ENCODE measurements at regions of chr7 and their contacts with region 1.

Region 1: DNA sequence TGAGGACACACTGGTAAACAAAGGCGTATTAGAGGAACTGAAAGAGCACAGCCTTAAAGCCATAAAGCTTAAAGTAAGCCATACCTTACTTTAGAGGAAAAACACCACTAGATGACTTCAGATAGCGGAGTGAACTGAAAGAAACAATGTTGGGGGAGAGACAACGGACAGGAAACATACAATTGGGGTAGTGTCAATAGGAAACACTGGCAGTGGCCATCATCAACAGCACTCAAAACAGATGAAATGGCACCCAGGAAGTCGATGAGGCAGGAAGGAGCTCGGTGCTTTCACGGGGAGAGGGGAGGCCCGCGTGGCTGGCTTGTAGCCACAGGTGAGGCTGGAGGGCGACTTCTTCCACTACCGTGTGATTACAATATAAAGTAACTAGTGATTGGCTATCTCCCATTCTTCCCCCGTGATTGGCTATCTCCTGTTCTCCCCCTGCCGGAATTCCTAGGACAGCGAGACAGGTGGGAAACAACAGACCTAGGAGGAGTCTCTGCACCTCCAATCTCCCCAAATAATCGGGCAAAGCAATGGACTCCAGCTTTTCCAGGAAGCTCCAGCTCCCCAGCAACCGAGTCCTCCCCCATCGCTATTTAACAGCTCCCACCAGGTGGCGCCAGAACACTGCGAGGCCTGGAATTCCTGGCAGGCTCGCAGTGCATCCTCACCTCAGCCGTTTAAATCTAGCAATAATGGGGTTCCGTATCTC is 2.4 kb upstream of the TAS2R38 start:
- DNase-seq: peak; percentile 79
- ATAC-seq: peak; percentile 79
- H3K4me3 Mint-ChIP-seq: peak overlapping the region; percentile 68
- H3K27ac Mint-ChIP-seq: peak overlapping the region; percentile 54
- H3K4me1 Mint-ChIP-seq: peaks cover 16% of the 10 kb centered on the region
- H3K27me3 Mint-ChIP-seq: no peaks in the 10 kb centered on the region

Region 2: DNA sequence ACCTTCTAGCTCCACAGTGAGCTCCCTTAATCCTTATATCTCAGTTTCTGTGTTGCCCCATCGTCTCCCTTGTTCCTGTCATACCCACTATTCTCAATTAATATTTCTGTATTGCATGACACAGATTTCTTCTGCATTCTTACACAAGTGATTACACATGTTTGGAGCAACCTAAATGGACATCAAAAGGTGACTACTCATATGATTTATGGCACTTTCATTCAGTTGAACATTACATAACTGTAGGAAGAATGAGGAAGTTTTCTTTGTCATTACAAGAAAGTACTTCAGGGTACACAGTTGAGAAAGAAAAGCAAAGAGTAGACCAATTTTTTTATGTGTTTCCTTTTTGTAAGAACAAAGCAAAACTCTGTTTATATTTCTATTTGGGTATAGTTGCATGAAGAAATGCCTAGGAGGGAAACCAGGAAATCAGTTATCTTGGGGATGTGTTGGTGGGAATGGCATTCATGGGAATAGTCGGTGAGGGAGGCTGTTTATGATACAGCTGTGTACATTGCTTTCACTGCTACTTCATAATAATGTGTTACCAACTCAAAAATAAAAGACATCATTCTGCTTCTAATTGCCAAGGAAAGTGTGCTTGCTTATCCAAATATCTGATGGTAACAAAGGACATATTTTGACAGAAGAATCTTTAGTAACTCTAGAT is 111.1 kb before region 1 on chr7:
- CTCF ChIA-PET with region 1: no interaction called
- DNase-seq: no peak
- ATAC-seq: no peak
- H3K4me3 Mint-ChIP-seq: no peak overlapping the region
- H3K27ac Mint-ChIP-seq: no peak overlapping the region
- H3K4me1 Mint-ChIP-seq: no peaks in the 10 kb centered on the region
- H3K27me3 Mint-ChIP-seq: no peaks in the 10 kb centered on the region

Region 3: GRCh38 chr7:141941075-141941474 is 34.9 kb before region 1 on chr7:
- CTCF ChIA-PET with region 1: no interaction called
- DNase-seq: no peak
- ATAC-seq: no peak
- H3K4me3 Mint-ChIP-seq: no peak overlapping the region
- H3K27ac Mint-ChIP-seq: no peak overlapping the region
- H3K4me1 Mint-ChIP-seq: no peaks in the 10 kb centered on the region
- H3K27me3 Mint-ChIP-seq: no peaks in the 10 kb centered on the region

Region 4: DNA sequence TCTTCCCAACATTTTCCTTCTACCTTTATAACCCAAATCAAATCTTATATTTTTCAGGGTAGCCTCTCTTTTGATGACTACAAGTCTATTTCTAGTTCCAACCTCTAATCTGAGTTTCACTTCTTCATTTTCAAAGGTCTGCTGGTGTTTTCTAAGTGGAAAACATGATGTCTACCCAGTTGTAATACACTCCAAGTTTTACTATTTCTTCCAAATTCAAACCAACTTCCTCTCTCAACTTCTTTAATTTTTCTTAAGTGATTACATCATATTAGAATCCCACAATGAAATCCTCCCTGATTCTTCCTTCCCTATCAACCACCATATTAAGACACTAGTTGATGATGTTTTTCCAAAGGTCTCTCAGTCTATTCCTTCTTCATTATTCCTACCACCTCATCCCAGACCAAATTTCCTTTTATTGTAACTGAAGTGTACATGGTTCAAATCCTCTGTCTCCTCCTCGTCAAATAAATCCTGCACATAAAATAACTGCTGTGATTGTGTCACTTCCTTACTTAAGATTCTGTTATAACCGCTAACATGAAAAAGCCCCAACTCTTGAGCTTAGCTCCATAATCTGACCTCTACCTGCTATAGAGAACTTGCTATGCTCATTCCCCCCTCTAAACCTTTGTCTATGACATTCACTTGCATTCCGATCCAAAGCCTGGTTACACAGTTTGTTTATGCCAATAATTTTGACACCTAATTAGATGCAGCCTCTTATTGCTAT is 15.1 kb before region 1 on chr7:
- CTCF ChIA-PET with region 1: interaction called, 13 read pairs
- DNase-seq: no peak
- ATAC-seq: no peak
- H3K4me3 Mint-ChIP-seq: no peak overlapping the region
- H3K27ac Mint-ChIP-seq: no peak overlapping the region
- H3K4me1 Mint-ChIP-seq: no peaks in the 10 kb centered on the region
- H3K27me3 Mint-ChIP-seq: no peaks in the 10 kb centered on the region

Region 5: DNA sequence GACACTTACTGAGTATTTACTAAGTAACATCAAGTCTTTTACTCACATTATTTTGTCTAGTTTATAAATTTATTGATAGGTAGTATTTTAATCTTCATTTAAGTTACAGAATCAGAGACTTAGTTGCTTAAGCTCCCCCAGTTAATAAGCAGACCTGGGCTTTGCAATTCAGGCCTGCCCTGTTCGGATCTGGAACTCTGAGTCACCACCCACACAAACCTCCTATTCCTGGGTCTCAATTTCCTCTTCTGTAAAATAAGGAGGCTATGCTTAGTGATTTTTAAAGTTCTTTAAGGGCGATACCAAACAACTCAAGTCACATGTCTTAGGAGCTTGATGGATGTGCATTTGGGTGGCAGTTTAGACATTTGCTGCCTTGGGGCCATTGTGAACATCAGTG is 16.2 kb after region 1 on chr7:
- CTCF ChIA-PET with region 1: interaction called, 12 read pairs
- DNase-seq: no peak
- ATAC-seq: no peak
- H3K4me3 Mint-ChIP-seq: no peak overlapping the region
- H3K27ac Mint-ChIP-seq: no peak overlapping the region
- H3K4me1 Mint-ChIP-seq: peaks cover 6% of the 10 kb centered on the region
- H3K27me3 Mint-ChIP-seq: no peaks in the 10 kb centered on the region

Region 6: GRCh38 chr7:142077762-142078161 is 101.8 kb after region 1 on chr7:
- CTCF ChIA-PET with region 1: no interaction called
- DNase-seq: no peak
- ATAC-seq: no peak
- H3K4me3 Mint-ChIP-seq: no peak overlapping the region
- H3K27ac Mint-ChIP-seq: no peak overlapping the region
- H3K4me1 Mint-ChIP-seq: no peaks in the 10 kb centered on the region
- H3K27me3 Mint-ChIP-seq: no peaks in the 10 kb centered on the region

Region 7: DNA sequence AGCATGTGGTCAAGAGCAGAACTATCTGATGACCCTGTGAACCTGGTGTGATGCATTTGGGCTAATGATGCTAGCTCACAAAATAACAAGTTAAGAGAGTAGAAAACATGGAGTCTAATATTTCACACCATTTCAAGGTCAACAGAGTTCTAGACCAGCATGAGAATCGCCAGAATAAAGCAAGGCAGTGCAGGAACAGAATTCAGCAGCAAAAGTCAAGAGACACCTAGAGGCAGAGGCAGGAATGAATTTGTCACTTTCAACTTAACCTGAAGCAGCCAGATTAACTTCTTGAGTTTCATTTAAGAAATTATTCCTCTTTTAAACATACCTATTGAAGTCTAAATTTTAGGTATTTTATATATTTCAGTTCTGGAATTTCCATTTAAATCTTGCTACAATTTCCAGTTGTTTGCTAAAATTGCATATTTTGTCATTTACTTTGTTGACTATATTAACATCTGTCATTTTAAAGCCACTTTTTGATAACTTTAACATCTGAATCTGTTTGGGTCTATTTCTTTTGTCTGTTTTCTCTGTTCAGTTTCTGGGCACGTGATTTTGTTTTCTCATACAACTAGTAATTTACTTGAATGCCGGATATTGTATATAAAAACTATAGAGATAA is 326.1 kb after region 1 on chr7:
- CTCF ChIA-PET with region 1: interaction called, 39 read pairs
- DNase-seq: no peak
- ATAC-seq: no peak
- H3K4me3 Mint-ChIP-seq: no peak overlapping the region
- H3K27ac Mint-ChIP-seq: no peak overlapping the region
- H3K4me1 Mint-ChIP-seq: peaks cover 15% of the 10 kb centered on the region
- H3K27me3 Mint-ChIP-seq: peaks cover 22% of the 10 kb centered on the region